PC-9 (cell line): ENCODE measurements at regions of chr4 and their contacts with region 1.

Region 1: GRCh38 chr4:182925298-182925738 is 8.1 kb upstream of the DCTD start:
- DNase-seq: peak; percentile 52 to 59
- H3K4me3 ChIP-seq: no peak overlapping the region
- H3K27ac ChIP-seq: no peak overlapping the region
- H3K4me1 ChIP-seq: no peaks in the 10 kb centered on the region
- H3K27me3 ChIP-seq: 0 out of 2 replicates have a peak, but pooled peaks cover 3% of the 10 kb centered on the region
- CTCF ChIP-seq: peak; percentile 61; the same call in 1 of the 2 replicates

Region 2: GRCh38 chr4:181301735-181302710 is 1623.3 kb before region 1 on chr4:
- CTCF ChIA-PET with region 1: no interaction called
- POLR2A ChIA-PET with region 1: no interaction called
- intact Hi-C with region 1: loop called (anchors 5 kb)
- DNase-seq: peak in 1 of 2 experiments; percentile 20
- H3K4me3 ChIP-seq: no peak overlapping the region
- H3K27ac ChIP-seq: no peak overlapping the region
- H3K4me1 ChIP-seq: no peaks in the 10 kb centered on the region
- H3K27me3 ChIP-seq: no peaks in the 10 kb centered on the region
- CTCF ChIP-seq: peak; percentile 67

Region 3: DNA sequence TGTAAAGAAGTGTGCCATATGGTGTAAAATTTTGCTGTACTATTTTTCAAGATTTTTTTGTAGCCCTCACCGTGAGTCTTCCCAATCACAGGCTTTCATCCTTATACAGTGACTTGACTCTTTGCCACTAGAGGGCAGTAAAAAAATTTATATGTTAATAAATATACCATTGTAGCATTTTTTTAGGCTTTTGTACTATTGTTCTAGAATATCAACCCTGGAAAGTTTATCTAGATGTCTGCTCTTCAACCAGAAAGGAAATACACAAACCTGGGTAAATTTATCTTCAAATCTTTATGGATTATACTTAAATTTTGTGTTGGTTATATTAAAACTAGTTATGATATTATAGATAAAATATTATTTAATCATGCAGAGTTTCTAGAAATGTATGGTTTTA is 446.8 kb before region 1 on chr4:
- CTCF ChIA-PET with region 1: no interaction called
- POLR2A ChIA-PET with region 1: no interaction called
- intact Hi-C with region 1: loop called (anchors 5 kb)
- DNase-seq: no peak
- H3K4me3 ChIP-seq: no peak overlapping the region
- H3K27ac ChIP-seq: no peak overlapping the region
- H3K4me1 ChIP-seq: no peaks in the 10 kb centered on the region
- H3K27me3 ChIP-seq: no peaks in the 10 kb centered on the region
- CTCF ChIP-seq: peak; percentile 67

Region 4: GRCh38 chr4:182862141-182862875 is 63.0 kb before region 1 on chr4:
- CTCF ChIA-PET with region 1: no interaction called
- POLR2A ChIA-PET with region 1: no interaction called
- intact Hi-C with region 1: no loop called
- DNase-seq: no peak
- H3K4me3 ChIP-seq: no peak overlapping the region
- H3K27ac ChIP-seq: no peak overlapping the region
- H3K4me1 ChIP-seq: no peaks in the 10 kb centered on the region
- H3K27me3 ChIP-seq: peaks cover 7% of the 10 kb centered on the region; the same call in 1 of the 2 replicates
- CTCF ChIP-seq: no peak

Region 5: DNA sequence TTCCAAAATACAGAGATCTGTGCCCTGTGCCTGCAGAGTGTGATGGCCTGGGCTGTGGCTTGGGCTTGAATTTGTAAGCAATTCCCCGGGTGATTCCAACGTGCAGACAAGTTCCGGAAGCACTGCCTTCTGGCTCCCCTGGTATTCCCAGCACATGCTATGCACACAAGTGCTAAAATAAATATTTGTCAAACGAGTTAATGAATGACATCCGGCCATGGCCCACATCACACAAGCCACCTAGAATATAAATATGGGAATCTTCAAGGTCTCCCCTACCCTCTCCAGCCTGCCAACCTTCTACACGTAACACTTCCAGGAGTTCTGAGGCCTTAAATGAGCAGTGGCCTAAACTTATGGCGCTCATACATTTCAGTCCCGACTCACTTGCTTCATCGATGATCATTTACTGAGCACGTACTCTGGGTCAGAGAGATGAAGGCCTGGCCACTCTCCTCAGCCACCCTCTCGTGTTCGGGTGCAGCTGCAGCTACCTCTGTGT is 29.5 kb before region 1 on chr4:
- CTCF ChIA-PET with region 1: no interaction called
- POLR2A ChIA-PET with region 1: no interaction called
- intact Hi-C with region 1: no loop called
- DNase-seq: no peak
- H3K4me3 ChIP-seq: no peak overlapping the region
- H3K27ac ChIP-seq: no peak overlapping the region
- H3K4me1 ChIP-seq: no peaks in the 10 kb centered on the region
- H3K27me3 ChIP-seq: no peaks in the 10 kb centered on the region
- CTCF ChIP-seq: no peak

Region 6: DNA sequence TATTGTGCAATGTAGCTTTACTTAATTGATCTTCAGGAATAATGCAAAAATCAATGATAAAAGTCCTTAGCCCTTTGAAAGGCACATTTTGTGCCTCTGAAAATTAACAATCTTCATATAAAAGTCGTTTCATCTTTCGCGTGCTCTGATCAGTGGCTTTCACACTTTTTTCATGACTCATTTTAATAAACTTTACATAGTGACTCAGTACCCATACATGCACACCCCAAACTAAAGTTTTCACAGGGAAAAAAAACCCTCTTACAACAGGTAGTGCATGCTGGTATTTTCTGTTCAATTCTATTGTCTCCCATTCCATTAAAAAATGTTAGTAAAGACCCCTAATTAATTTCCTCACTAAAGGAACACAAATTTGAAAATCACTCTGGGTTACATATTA is 712.1 kb after region 1 on chr4:
- CTCF ChIA-PET with region 1: no interaction called
- POLR2A ChIA-PET with region 1: no interaction called
- intact Hi-C with region 1: no loop called
- DNase-seq: peak in 1 of 2 experiments; percentile 73
- H3K4me3 ChIP-seq: no peak overlapping the region
- H3K27ac ChIP-seq: peak overlapping the region; percentile 46
- H3K4me1 ChIP-seq: peaks cover 16% of the 10 kb centered on the region
- H3K27me3 ChIP-seq: no peaks in the 10 kb centered on the region
- CTCF ChIP-seq: no peak